Heart left ventricle (tissue), 16 donors: ENCODE measurements at regions of chr10 and their contacts with region 1.

Region 1: DNA sequence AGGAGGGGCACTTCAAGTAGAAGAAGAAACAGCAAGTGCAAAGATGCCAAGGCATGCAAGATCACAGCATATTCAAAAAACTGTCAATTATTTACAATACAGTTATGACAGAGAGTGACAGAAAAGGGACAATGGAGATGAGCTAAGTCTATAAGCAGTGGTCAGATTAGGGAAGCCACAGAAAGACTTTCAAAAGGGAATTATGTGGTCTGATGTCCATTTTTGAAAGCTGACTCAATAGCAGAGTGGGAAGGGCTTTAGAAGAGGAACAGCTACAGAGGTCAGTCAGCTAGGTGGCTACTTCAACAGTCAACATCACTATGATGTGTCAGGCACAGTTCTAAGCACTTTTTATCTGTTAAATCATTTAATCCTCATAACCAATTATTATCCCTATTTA is 45.2 kb upstream of the SPOCK2 start:
- DNase-seq: no peak
- ATAC-seq: peak in 3 of 4 donors; percentile 40 to 66 (median 43)
- H3K4me3 ChIP-seq: no peak overlapping the region
- H3K27ac ChIP-seq: no peak overlapping the region
- H3K4me1 ChIP-seq: peaks cover 0 to 16% (median 1%) of the 10 kb centered on the region in 12 donors
- H3K27me3 ChIP-seq: no peaks in the 10 kb centered on the region
- CTCF ChIP-seq: no peak
- POLR2A ChIP-seq: no peak

Region 2: DNA sequence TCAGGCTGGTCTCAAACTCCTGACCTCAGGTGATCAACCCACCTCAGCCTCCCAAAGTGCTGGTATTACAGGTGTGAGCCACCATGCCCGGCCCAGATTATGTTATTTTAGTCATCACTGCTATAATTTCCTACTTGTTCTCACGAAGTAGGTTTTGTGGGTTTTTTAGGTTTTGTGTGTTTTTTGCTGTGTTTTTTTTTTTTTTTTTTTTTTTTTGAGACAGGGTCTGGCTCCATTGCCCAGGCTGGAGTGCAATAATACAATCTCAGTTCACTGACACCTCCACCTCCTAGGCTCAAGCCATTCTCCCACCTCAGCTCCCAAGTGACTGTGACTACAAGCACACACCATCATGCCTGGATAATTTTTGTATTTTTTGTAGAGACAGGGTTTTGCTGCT is 61.4 kb after region 1 on chr10:
- intact Hi-C with region 1: loop called in 2 of 10 experiments (anchors 5 to 10 kb)
- DNase-seq: no peak
- ATAC-seq: no peak
- H3K4me3 ChIP-seq: no peak overlapping the region
- H3K27ac ChIP-seq: no peak overlapping the region
- H3K4me1 ChIP-seq: no peaks in the 10 kb centered on the region
- H3K27me3 ChIP-seq: no peaks in the 10 kb centered on the region
- CTCF ChIP-seq: no peak
- POLR2A ChIP-seq: no peak

Region 3: GRCh38 chr10:72204296-72204695 is 70.8 kb after region 1 on chr10:
- intact Hi-C with region 1: loop called in 2 of 10 experiments (anchors 5 to 10 kb)
- DNase-seq: no peak
- ATAC-seq: peak in 1 of 4 donors; percentile 24
- H3K4me3 ChIP-seq: no peak overlapping the region
- H3K27ac ChIP-seq: peak overlapping the region in 1 of 12 donors; percentile 54
- H3K4me1 ChIP-seq: peaks cover 0 to 9% (median 0%) of the 10 kb centered on the region in 12 donors
- H3K27me3 ChIP-seq: no peaks in the 10 kb centered on the region
- CTCF ChIP-seq: no peak
- POLR2A ChIP-seq: no peak

Region 4: GRCh38 chr10:72215652-72216549 is 82.4 kb after region 1 on chr10 and contains the starts of genes ANAPC16 and ASCC1:
- intact Hi-C with region 1: loop called in 8 of 10 experiments (anchors 5 to 10 kb)
- DNase-seq: peak; percentile 91 to 96 (median 93)
- ATAC-seq: peak; percentile 92 to 99 (median 98)
- H3K4me3 ChIP-seq: peak within 1 kb of the TSS; percentile 62 to 91 (median 72)
- H3K27ac ChIP-seq: peak within 1 kb of the TSS; percentile 91 to 100 (median 98)
- H3K4me1 ChIP-seq: peaks cover 9 to 54% (median 38%) of the 10 kb centered on the region in 12 donors
- H3K27me3 ChIP-seq: no peaks in the 10 kb centered on the region
- CTCF ChIP-seq: peak in 1 of 12 donors; percentile 5
- POLR2A ChIP-seq: peak; percentile 41 to 92
- total RNA-seq, gene ANAPC16: 135 to 237 (median 179) TPM
- total RNA-seq, gene ASCC1: 26.4 to 44.8 (median 35.3) TPM

Region 5: GRCh38 chr10:72223743-72224101 is 90.2 kb after region 1 on chr10:
- intact Hi-C with region 1: loop called in 8 of 10 experiments (anchors 5 to 10 kb)
- DNase-seq: no peak
- ATAC-seq: peak; percentile 13 to 61 (median 32)
- H3K4me3 ChIP-seq: no peak overlapping the region
- H3K27ac ChIP-seq: peak overlapping the region in 11 of 12 donors; percentile 14 to 78 (median 58)
- H3K4me1 ChIP-seq: peaks cover 0 to 57% (median 21%) of the 10 kb centered on the region in 12 donors
- H3K27me3 ChIP-seq: no peaks in the 10 kb centered on the region
- CTCF ChIP-seq: no peak
- POLR2A ChIP-seq: no peak

Region 6: DNA sequence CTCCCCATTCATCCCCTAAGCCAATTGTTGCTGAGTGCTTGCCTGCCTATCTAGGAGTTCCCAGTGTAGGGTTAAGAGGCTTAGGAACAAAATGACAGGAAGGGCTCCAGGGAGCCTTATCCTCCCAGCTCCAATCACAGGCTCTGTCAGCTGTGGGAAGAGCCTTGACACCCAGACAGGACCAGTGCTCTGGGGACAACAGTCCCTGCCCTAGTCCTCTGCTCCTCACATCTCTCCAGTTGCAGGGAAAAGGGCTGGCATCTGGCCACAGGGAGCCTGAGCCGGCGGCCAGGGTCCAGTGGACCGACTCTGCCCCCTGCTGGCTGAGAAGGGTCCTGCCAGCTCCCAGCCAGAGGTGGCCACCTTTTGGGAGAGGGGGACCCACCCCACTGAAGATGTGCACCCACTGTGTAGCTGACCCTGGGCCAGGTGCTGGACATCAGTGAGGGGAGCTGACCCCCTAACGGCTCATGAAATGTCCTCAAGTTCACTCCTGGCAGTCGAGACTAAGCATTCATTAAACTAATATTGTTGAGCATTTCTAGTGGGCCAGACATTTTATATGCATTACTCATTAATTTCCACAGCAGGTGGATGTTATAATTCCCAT is 203.6 kb after region 1 on chr10:
- intact Hi-C with region 1: loop called in 9 of 10 experiments (anchors 2 to 10 kb)
- DNase-seq: peak; percentile 87 to 94 (median 92)
- ATAC-seq: peak; percentile 16 to 44 (median 39)
- H3K4me3 ChIP-seq: no peak overlapping the region
- H3K27ac ChIP-seq: peak overlapping the region; percentile 82 to 98 (median 92)
- H3K4me1 ChIP-seq: peaks cover 8 to 63% (median 53%) of the 10 kb centered on the region in 12 donors
- H3K27me3 ChIP-seq: no peaks in the 10 kb centered on the region
- CTCF ChIP-seq: peak; percentile 93 to 99 (median 98)
- POLR2A ChIP-seq: no peak